ENCODE measurements at regions of chr2 and their contacts with region 1.

Region 1: GRCh38 chr2:189580658-189581353 is at the start of gene SLC40A1:
- DNase-seq: peak; percentile 69 to 82 (median 72)
- ATAC-seq: peak; percentile 86
- H3K4me3 ChIP-seq: peak within 1 kb of the TSS; percentile 53
- H3K27ac ChIP-seq: peak within 1 kb of the TSS; percentile 95
- H3K4me1 ChIP-seq: peaks cover 0 to 23% of the 10 kb centered on the region in 2 experiments; a peak in 3 of 5 replicates
- H3K27me3 ChIP-seq: no peaks in the 10 kb centered on the region
- CTCF ChIP-seq: no peak
- EP300 ChIP-seq: no peak
- POLR2A ChIP-seq: peak; percentile 70
- RAD21 ChIP-seq: no peak
- polyA plus RNA-seq, gene SLC40A1: 53.3 to 54.9 TPM

Region 2: GRCh38 chr2:189454009-189454408 is 126.8 kb before region 1 on chr2:
- CTCF ChIA-PET with region 1: no interaction called
- POLR2A ChIA-PET with region 1: no interaction called
- in situ Hi-C with region 1: no loop called
- intact Hi-C with region 1: no loop called
- DNase-seq: no peak
- ATAC-seq: no peak
- H3K4me3 ChIP-seq: no peak overlapping the region
- H3K27ac ChIP-seq: no peak overlapping the region
- H3K4me1 ChIP-seq: no peaks in the 10 kb centered on the region
- H3K27me3 ChIP-seq: no peaks in the 10 kb centered on the region
- CTCF ChIP-seq: no peak
- EP300 ChIP-seq: no peak
- POLR2A ChIP-seq: no peak
- RAD21 ChIP-seq: no peak

Region 3: GRCh38 chr2:189466660-189467059 is 114.1 kb before region 1 on chr2:
- CTCF ChIA-PET with region 1: no interaction called
- POLR2A ChIA-PET with region 1: interaction called, 5 read pairs
- in situ Hi-C with region 1: no loop called
- intact Hi-C with region 1: loop called (anchors 2 kb)
- DNase-seq: peak; percentile 17 to 45 (median 24)
- ATAC-seq: peak; percentile 83
- H3K4me3 ChIP-seq: no peak overlapping the region
- H3K27ac ChIP-seq: no peak overlapping the region
- H3K4me1 ChIP-seq: peaks cover 0 to 7% of the 10 kb centered on the region in 2 experiments; a peak in 2 of 5 replicates
- H3K27me3 ChIP-seq: no peaks in the 10 kb centered on the region
- CTCF ChIP-seq: peak; percentile 46 to 61 (median 54); a peak in 5 of 6 replicates
- EP300 ChIP-seq: no peak
- POLR2A ChIP-seq: no peak
- RAD21 ChIP-seq: peak; percentile 48 to 65

Region 4: DNA sequence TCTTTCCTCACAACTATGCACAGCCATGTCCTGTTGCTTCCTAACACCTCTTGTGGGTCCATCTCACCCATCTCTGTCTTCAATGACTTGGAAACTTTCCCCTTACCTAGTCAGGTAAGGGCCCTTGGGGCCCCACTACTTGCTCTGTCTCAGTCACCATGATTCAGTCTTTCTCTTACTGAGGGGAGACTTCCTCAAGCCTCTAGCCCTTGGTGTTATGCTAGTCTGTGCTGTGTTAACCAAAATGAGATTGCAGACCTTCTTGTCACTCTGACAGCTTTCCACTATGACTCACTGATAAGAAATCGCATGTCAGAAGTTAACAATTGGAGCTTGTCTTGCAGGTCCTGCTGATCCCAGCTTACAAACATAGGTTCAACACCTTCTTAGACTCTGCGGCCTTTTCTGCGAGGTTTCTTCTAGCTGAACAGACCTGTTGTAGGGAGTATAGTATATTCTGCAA is 74.3 kb before region 1 on chr2:
- CTCF ChIA-PET with region 1: no interaction called
- POLR2A ChIA-PET with region 1: interaction called, 4 read pairs
- in situ Hi-C with region 1: no loop called
- intact Hi-C with region 1: loop called (anchors 5 kb)
- DNase-seq: peak; percentile 57 to 87 (median 70)
- ATAC-seq: peak; percentile 98
- H3K4me3 ChIP-seq: no peak overlapping the region
- H3K27ac ChIP-seq: peak overlapping the region; percentile 93
- H3K4me1 ChIP-seq: peaks cover 12 to 25% of the 10 kb centered on the region in 2 experiments
- H3K27me3 ChIP-seq: no peaks in the 10 kb centered on the region
- CTCF ChIP-seq: no peak
- EP300 ChIP-seq: peak; percentile 91
- POLR2A ChIP-seq: no peak
- RAD21 ChIP-seq: 0 out of 4 replicates have a peak, but pooled peaks have one; percentile 4 to 24

Region 5: GRCh38 chr2:189613077-189613636 is 32.4 kb after region 1 on chr2:
- CTCF ChIA-PET with region 1: no interaction called
- POLR2A ChIA-PET with region 1: interaction called, 9 read pairs
- in situ Hi-C with region 1: no loop called
- intact Hi-C with region 1: loop called (anchors 2 kb)
- DNase-seq: peak; percentile 32 to 88 (median 54)
- ATAC-seq: peak; percentile 90
- H3K4me3 ChIP-seq: peak overlapping the region; percentile 10; the same call in 1 of the 2 replicates
- H3K27ac ChIP-seq: peak overlapping the region; percentile 79
- H3K4me1 ChIP-seq: peaks cover 7 to 42% of the 10 kb centered on the region in 2 experiments; a peak in 4 of 5 replicates
- H3K27me3 ChIP-seq: no peaks in the 10 kb centered on the region
- CTCF ChIP-seq: no peak
- EP300 ChIP-seq: peak; percentile 86
- POLR2A ChIP-seq: peak; percentile 56; the same call in 1 of the 2 replicates
- RAD21 ChIP-seq: no peak

Region 6: DNA sequence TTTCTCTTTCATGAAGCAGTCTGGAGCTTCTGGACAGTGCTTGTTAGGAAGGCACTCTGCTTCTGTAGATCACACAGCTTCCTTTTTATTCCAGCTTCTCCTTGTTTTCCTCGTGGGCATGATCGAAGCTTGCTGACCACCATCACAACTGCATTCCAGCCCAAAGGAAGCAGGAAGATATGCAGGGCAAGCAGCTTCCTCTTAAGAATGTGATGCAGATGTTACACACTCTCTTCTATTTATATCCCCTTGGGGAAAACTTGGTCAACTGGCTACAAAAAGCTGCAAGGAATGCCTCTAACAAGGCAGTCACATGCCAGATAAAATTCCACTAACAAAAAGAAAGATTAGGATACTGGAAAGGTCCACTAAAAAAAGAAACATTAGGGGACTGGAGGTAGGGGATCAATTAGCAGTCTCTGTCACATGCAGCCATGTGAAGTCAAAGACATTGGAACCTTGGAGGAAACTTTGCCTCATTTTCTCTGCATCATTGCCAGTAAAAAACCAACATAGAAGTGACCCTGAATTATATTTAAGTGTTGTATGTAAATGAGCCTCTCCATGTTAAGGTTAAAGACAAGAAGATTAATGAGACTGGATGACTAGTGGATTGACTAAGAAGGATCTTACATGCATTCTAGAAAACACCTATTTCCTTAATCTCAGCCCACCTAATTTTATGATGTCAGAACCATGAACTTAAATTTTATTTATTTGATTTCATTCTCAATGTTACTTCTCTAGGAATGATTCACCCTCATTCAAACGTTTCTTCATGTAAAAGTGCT is 1166.4 kb after region 1 on chr2:
- CTCF ChIA-PET with region 1: no interaction called
- POLR2A ChIA-PET with region 1: no interaction called
- in situ Hi-C with region 1: no loop called
- intact Hi-C with region 1: no loop called
- DNase-seq: no peak
- ATAC-seq: no peak
- H3K4me3 ChIP-seq: no peak overlapping the region
- H3K27ac ChIP-seq: no peak overlapping the region
- H3K4me1 ChIP-seq: peaks cover 0 to 3% of the 10 kb centered on the region in 2 experiments; a peak in 1 of 5 replicates
- H3K27me3 ChIP-seq: no peaks in the 10 kb centered on the region
- CTCF ChIP-seq: no peak
- EP300 ChIP-seq: no peak
- POLR2A ChIP-seq: no peak
- RAD21 ChIP-seq: no peak